Aorta (tissue), 5 donors: ENCODE measurements at regions of chr3 and their contacts with region 1.

Region 1: GRCh38 chr3:53748512-53749271 is 97.5 kb downstream of the CHDH start:
- DNase-seq: no peak
- ATAC-seq: no peak
- H3K4me3 ChIP-seq: no peak overlapping the region
- H3K27ac ChIP-seq: no peak overlapping the region
- H3K4me1 ChIP-seq: no peaks in the 10 kb centered on the region
- H3K27me3 ChIP-seq: no peaks in the 10 kb centered on the region

Region 2: GRCh38 chr3:53320697-53321096 is 428.0 kb before region 1 on chr3:
- intact Hi-C with region 1: no loop called
- DNase-seq: no peak
- ATAC-seq: peak; percentile 52
- H3K4me3 ChIP-seq: no peak overlapping the region
- H3K27ac ChIP-seq: peak overlapping the region; percentile 12 to 43
- H3K4me1 ChIP-seq: peaks cover 0 to 2% of the 10 kb centered on the region in 2 donors
- H3K27me3 ChIP-seq: no peaks in the 10 kb centered on the region

Region 3: GRCh38 chr3:53795789-53796560 is 47.3 kb after region 1 on chr3:
- intact Hi-C with region 1: loop called in 1 of 2 experiments (anchors 10 kb)
- DNase-seq: peak in 1 of 2 donors; percentile 75
- ATAC-seq: no peak
- H3K4me3 ChIP-seq: no peak overlapping the region
- H3K27ac ChIP-seq: no peak overlapping the region
- H3K4me1 ChIP-seq: no peaks in the 10 kb centered on the region
- H3K27me3 ChIP-seq: no peaks in the 10 kb centered on the region